ENCODE measurements at regions of chr21 and their contacts with region 1.

Region 1: DNA sequence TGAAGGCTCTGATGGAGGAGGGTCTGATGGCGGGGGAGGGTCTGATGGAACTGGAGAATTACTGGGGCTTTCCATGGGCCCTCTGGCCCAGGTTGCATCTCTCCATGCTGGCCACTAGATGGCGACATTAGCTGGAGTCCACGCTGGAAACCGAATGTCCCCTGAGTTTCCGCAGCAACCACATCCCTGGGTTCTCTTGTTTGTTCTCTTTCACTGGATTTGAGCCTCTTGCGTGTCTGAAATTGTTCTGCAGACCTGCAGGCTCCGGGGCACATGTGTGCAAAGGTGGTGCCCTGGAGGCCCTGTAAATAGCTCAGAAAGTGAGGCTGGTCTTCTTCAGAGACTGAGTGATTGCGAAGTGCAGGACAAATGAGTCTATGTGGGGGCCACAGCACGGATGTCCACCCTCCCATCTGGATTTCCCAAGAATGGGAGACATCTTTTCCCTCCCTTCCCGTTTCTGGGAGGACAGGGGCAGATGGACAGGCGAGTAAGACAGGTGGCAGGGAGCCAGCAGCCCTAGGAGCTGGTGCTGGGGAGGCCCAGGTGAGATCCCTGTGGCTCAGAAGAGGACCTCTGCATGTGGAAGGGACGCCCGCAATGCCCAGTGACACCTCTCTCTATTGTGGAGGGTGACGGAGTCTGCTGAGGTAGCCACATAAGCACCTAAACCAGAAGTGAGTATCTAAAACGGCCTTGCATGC is 73.2 kb upstream of the ABCG1 start:
- DNase-seq: peak; percentile 37 to 81 (median 68)
- ATAC-seq: peak; percentile 90
- H3K4me3 ChIP-seq: no peak overlapping the region
- H3K4me3 Mint-ChIP-seq: peak overlapping the region in 2 of 10 donors; percentile 41 to 43
- H3K27ac ChIP-seq: no peak overlapping the region
- H3K27ac Mint-ChIP-seq: peak overlapping the region in 6 of 9 donors; percentile 0 to 56 (median 40)
- H3K4me1 ChIP-seq: peaks cover 3 to 5% of the 10 kb centered on the region in 2 donors
- H3K4me1 Mint-ChIP-seq: peaks cover 5 to 13% (median 10%) of the 10 kb centered on the region in 7 donors
- H3K27me3 ChIP-seq: no peaks in the 10 kb centered on the region
- H3K27me3 Mint-ChIP-seq: peaks cover 0 to 4% (median 0%) of the 10 kb centered on the region in 5 donors

Region 2: DNA sequence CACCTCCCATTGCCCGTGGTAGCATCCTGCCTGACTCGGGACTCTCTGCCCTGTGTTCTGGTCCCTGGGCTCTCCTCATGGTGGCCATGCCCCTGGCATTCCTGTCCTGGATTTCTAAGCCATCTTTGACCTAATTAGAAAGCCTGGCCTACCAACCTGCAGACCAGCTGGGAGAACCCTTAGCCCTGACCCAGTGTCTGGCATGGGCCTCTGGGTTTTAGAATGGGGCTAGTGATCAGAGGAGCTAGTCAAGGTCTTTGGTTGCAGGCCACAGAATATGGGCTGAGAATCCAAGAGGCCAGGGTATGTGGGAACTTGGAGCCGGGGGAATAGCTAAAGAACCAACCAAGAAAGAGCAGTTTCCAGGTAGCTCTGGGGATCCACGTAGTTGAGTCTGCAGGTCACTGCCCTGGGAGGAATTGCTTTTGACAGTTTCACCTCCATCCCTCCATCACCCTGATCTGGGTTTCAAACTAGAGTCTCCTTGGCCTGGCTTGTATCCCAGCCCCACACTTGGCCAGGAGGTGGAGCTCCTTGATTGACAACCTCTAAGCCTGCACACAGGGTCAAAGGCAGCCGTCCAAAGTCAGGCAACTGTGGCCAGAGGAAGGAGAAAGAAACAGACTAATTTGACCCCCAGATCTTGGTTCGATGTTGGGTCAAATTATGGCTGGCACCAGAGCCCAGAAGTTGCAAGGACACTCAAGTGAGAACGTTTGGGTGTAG is 18.5 kb after region 1 on chr21:
- CTCF ChIA-PET with region 1: interaction called, 5 read pairs
- POLR2A ChIA-PET with region 1: no interaction called
- intact Hi-C with region 1: loop called in 1 of 2 experiments (anchors 1 kb)
- DNase-seq: peak in 7 of 9 donors; percentile 18 to 50 (median 44)
- ATAC-seq: peak; percentile 80
- H3K4me3 ChIP-seq: no peak overlapping the region
- H3K4me3 Mint-ChIP-seq: no peak overlapping the region
- H3K27ac ChIP-seq: no peak overlapping the region
- H3K27ac Mint-ChIP-seq: peak overlapping the region in 5 of 9 donors; percentile 9 to 77 (median 64)
- H3K4me1 ChIP-seq: peaks cover 7 to 30% of the 10 kb centered on the region in 2 donors
- H3K4me1 Mint-ChIP-seq: peaks cover 27 to 56% (median 45%) of the 10 kb centered on the region in 7 donors
- H3K27me3 ChIP-seq: no peaks in the 10 kb centered on the region
- H3K27me3 Mint-ChIP-seq: peaks cover 0 to 7% (median 0%) of the 10 kb centered on the region in 5 donors

Region 3: DNA sequence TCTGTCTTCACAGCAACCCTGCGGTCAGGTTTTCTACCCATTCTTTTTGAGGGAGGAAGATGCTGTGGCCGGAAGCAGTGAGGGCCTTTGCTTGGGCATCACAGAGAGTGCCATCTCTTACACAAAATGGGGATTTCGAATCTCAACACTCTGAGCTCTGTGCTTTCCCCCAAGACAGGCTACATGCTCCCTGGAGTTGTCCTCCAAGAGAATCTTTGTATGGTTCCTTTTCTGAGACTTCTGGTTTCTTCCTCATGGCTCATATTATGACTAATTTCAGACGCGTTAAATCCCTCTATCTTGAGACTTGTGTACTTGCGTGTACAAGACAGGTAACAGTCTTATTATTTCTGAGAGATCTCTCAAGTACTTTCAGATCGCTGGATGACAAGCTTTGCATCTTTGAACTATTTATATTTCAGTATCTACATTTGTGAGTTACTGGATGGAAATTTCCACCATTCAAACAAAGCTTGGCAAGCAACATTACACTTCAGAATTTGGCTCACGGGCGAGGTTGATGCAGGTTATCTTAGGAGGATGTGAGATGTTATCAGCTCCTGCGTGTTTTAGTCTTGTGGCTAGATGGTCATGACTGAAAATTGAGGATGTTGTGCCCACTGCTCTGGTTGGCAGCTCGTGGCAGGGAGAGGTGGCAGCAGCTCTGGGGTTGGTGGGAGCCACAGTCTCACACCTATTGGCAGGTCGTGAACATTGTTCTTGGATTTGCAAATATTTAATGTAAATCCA is 92.6 kb after region 1 on chr21:
- CTCF ChIA-PET with region 1: interaction called, 11 read pairs
- POLR2A ChIA-PET with region 1: interaction called, 4 read pairs
- intact Hi-C with region 1: no loop called
- DNase-seq: peak in 7 of 9 donors; percentile 59 to 82 (median 76)
- ATAC-seq: peak; percentile 44
- H3K4me3 ChIP-seq: no peak overlapping the region
- H3K4me3 Mint-ChIP-seq: peak overlapping the region; percentile 58 to 86 (median 74)
- H3K27ac ChIP-seq: peak overlapping the region; percentile 48
- H3K27ac Mint-ChIP-seq: peak overlapping the region; percentile 52 to 99 (median 83)
- H3K4me1 ChIP-seq: peaks cover 58 to 61% of the 10 kb centered on the region in 2 donors
- H3K4me1 Mint-ChIP-seq: peaks cover 52 to 80% (median 63%) of the 10 kb centered on the region in 7 donors
- H3K27me3 ChIP-seq: no peaks in the 10 kb centered on the region
- H3K27me3 Mint-ChIP-seq: no peaks in the 10 kb centered on the region

Region 4: GRCh38 chr21:42309753-42310221 is 164.1 kb after region 1 on chr21:
- CTCF ChIA-PET with region 1: interaction called, 4 read pairs
- POLR2A ChIA-PET with region 1: no interaction called
- intact Hi-C with region 1: loop called in 1 of 2 experiments (anchors 1 kb)
- DNase-seq: peak; percentile 48 to 80 (median 61)
- ATAC-seq: peak; percentile 86
- H3K4me3 ChIP-seq: no peak overlapping the region
- H3K4me3 Mint-ChIP-seq: peak overlapping the region in 6 of 10 donors; percentile 7 to 46 (median 38)
- H3K27ac ChIP-seq: no peak overlapping the region
- H3K27ac Mint-ChIP-seq: peak overlapping the region in 6 of 9 donors; percentile 21 to 49 (median 36)
- H3K4me1 ChIP-seq: peaks cover 0 to 8% of the 10 kb centered on the region in 2 donors
- H3K4me1 Mint-ChIP-seq: peaks cover 0 to 16% (median 7%) of the 10 kb centered on the region in 7 donors
- H3K27me3 ChIP-seq: no peaks in the 10 kb centered on the region
- H3K27me3 Mint-ChIP-seq: peaks cover 0 to 15% (median 0%) of the 10 kb centered on the region in 5 donors

Region 5: GRCh38 chr21:42381334-42381984 is 235.7 kb after region 1 on chr21:
- CTCF ChIA-PET with region 1: interaction called, 3 read pairs
- POLR2A ChIA-PET with region 1: no interaction called
- intact Hi-C with region 1: loop called in 1 of 2 experiments (anchors 1 kb)
- DNase-seq: peak in 4 of 9 donors; percentile 22 to 41 (median 29)
- ATAC-seq: peak; percentile 77
- H3K4me3 ChIP-seq: no peak overlapping the region
- H3K4me3 Mint-ChIP-seq: no peak overlapping the region
- H3K27ac ChIP-seq: no peak overlapping the region
- H3K27ac Mint-ChIP-seq: peak overlapping the region in 2 of 9 donors; percentile 29 to 71
- H3K4me1 ChIP-seq: peaks cover 0 to 14% of the 10 kb centered on the region in 2 donors
- H3K4me1 Mint-ChIP-seq: peaks cover 6 to 29% (median 25%) of the 10 kb centered on the region in 7 donors
- H3K27me3 ChIP-seq: no peaks in the 10 kb centered on the region
- H3K27me3 Mint-ChIP-seq: no peaks in the 10 kb centered on the region

Region 6: GRCh38 chr21:42524349-42525151 is 378.8 kb after region 1 on chr21:
- CTCF ChIA-PET with region 1: no interaction called
- POLR2A ChIA-PET with region 1: no interaction called
- intact Hi-C with region 1: loop called in 1 of 2 experiments (anchors 5 kb)
- DNase-seq: peak in 3 of 9 donors; percentile 10 to 25 (median 20)
- ATAC-seq: peak; percentile 60
- H3K4me3 ChIP-seq: no peak overlapping the region
- H3K4me3 Mint-ChIP-seq: peak overlapping the region in 7 of 10 donors; percentile 20 to 52 (median 43)
- H3K27ac ChIP-seq: no peak overlapping the region
- H3K27ac Mint-ChIP-seq: peak overlapping the region in 8 of 9 donors; percentile 6 to 88 (median 56)
- H3K4me1 ChIP-seq: peaks cover 16 to 30% of the 10 kb centered on the region in 2 donors
- H3K4me1 Mint-ChIP-seq: peaks cover 39 to 64% (median 54%) of the 10 kb centered on the region in 7 donors
- H3K27me3 ChIP-seq: no peaks in the 10 kb centered on the region
- H3K27me3 Mint-ChIP-seq: no peaks in the 10 kb centered on the region